ENCODE measurements at regions of chr10 and their contacts with region 1.

Region 1: DNA sequence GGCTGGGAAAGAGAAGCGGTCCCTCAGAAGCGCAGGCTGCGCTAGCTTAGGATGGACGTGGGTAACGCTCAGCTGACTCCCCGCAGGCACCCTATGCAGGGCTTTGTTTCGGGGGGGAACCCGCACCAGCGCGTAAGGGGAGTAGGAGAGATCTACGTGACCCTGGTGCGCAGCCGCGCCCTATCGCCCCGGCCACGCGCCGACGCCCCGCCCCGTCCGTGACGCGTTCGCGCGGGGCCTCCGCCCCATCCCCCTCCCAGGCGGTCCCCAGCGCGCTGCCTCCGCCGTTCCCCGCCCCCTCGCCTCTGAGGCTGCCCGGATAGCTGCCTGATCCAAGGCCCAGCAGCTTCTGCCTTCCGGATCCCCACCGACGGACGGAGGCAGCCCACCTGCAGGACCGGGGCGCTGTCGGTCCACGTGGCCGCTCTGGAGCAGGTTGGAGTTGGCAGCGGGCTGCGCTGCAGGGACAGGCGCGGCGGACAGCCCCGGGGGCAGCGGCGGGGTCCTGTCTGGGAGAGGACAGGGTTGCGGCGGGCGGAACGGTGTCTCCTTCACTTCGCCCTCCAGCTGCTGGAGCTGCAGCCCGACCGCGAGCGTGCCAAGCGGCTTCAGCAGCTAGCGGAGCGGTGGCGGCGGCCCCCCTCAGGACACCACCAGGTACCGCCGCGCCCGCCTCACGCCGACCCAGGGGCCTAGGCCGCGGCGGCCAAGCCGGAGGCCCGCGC is at the start of gene VDAC2:
- DNase-seq: peak; percentile 75
- ATAC-seq: peak; percentile 91
- H3K4me3 ChIP-seq: peak within 1 kb of the TSS; percentile 91
- H3K27ac ChIP-seq: peak within 1 kb of the TSS; percentile 98
- H3K4me1 ChIP-seq: 0 out of 2 replicates have a peak, but pooled peaks cover 4% of the 10 kb centered on the region
- H3K27me3 ChIP-seq: no peaks in the 10 kb centered on the region
- CTCF ChIP-seq: no peak
- EP300 ChIP-seq: peak; percentile 23 to 31; a peak in 1 of 4 replicates
- POLR2A ChIP-seq: peak; percentile 92
- RAD21 ChIP-seq: no peak
- polyA plus RNA-seq, gene VDAC2: 99.7 to 136 TPM

Region 2: DNA sequence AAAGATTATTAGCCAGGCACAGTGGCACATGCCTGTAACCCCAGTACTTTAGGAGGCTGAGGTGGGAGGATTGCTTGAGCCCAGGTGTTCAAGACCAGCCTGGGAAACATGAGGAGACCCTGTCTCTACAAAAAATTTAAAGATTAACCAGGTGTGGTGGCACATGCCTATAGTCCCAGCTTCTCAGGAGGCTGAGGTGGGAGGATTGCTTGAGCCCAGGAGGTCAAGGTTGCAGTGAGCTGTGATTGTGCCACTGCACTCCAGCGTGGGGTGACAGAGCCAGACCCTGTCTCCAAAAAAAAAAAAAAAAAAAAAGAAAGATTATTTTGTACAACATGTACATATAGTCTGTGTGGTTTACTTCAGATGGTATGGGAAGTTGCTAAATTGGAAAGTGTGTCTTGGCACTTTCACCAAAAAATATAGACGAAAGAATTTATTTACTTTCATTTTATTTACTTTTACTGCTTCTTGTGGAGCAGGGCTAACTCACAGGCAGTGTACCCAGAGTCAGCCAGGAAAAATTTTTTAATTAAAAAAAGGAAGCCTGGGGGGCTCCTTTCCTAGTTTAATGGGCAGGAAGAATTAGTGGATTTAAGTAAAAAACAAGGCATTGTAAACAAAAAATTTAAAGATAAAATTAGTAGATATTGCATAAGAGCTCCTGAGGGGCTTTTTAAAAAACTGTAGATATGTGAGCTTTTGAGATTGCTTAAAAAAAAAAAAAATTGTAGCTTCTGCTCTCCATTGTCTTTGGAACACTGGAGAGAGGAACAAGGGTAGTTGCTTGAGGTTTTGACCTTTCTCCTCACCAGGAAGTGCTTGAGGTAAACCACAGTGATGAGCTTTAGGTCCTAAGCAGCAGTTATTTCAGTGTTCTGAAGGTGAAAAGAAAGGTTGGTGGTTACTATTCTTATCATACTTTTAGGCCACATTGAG is 44.5 kb before region 1 on chr10:
- CTCF ChIA-PET with region 1: no interaction called
- POLR2A ChIA-PET with region 1: interaction called, 4 read pairs
- RAD21 ChIA-PET with region 1: interaction called, 13 read pairs
- SMC1A ChIA-PET with region 1: interaction called, 3 read pairs
- in situ Hi-C with region 1: no loop called
- intact Hi-C with region 1: no loop called
- DNase-seq: peak; percentile 62
- ATAC-seq: peak; percentile 94
- H3K4me3 ChIP-seq: peak overlapping the region; percentile 57
- H3K27ac ChIP-seq: peak overlapping the region; percentile 76
- H3K4me1 ChIP-seq: peaks cover 17% of the 10 kb centered on the region
- H3K27me3 ChIP-seq: no peaks in the 10 kb centered on the region
- CTCF ChIP-seq: no peak
- EP300 ChIP-seq: peak; percentile 44 to 47; a peak in 1 of 4 replicates
- POLR2A ChIP-seq: no peak
- RAD21 ChIP-seq: no peak

Region 3: DNA sequence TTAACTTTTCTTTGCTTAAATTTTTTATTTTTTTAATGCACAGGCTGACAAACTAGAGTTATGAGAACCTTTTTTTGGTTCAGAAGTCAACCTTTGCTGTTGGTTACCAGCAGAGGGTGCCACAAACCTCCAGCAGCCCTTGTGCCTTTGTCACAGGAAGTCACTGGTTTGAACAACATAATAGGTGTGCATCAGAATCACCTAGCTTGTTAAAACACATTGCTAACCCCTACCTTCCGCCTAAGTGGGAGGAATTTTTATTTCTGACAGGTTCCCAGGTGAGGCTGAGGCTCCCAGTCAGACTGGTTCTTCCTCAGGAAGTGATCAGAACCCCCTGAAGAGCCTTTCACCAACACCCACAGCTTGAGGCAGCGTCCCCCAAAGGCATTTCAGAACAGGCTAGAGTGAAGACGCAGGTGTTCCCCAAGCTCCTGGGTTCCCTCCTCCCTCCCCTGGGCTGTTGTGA is 22.4 kb before region 1 on chr10:
- CTCF ChIA-PET with region 1: interaction called, 20 read pairs
- POLR2A ChIA-PET with region 1: interaction called, 4 read pairs
- RAD21 ChIA-PET with region 1: interaction called, 14 read pairs
- SMC1A ChIA-PET with region 1: interaction called, 9 read pairs
- in situ Hi-C with region 1: no loop called
- intact Hi-C with region 1: no loop called
- DNase-seq: peak; percentile 20
- ATAC-seq: peak; percentile 96
- H3K4me3 ChIP-seq: no peak overlapping the region
- H3K27ac ChIP-seq: no peak overlapping the region
- H3K4me1 ChIP-seq: no peaks in the 10 kb centered on the region
- H3K27me3 ChIP-seq: no peaks in the 10 kb centered on the region
- CTCF ChIP-seq: peak; percentile 75 to 81 (median 79)
- EP300 ChIP-seq: no peak
- POLR2A ChIP-seq: no peak
- RAD21 ChIP-seq: peak; percentile 83

Region 4: DNA sequence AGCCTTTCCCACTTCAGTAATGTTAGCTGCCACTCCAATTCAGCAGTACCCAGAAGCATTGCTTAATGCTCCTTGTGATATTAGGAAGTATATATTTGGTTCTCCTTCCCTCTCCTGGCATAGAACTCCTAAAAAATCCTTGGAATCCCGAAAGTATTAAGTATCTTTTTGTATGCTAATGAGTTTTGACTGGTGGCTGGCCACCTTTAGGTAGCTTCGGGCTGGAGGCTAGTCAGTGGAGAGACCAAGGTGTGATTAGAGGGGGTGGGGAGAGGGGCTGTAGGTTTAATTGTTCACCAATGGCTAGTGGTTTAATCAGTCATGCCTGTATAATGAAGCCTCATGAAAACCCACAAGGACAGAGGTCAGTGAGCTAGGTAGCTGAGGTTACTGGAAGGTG is 13.1 kb after region 1 on chr10:
- CTCF ChIA-PET with region 1: interaction called, 76 read pairs
- POLR2A ChIA-PET with region 1: interaction called, 21 read pairs
- RAD21 ChIA-PET with region 1: interaction called, 3 read pairs
- SMC1A ChIA-PET with region 1: interaction called, 8 read pairs
- in situ Hi-C with region 1: no loop called
- intact Hi-C with region 1: no loop called
- DNase-seq: no peak
- ATAC-seq: no peak; the same call in 1 of the 3 replicates
- H3K4me3 ChIP-seq: no peak overlapping the region
- H3K27ac ChIP-seq: no peak overlapping the region
- H3K4me1 ChIP-seq: peaks cover 3% of the 10 kb centered on the region
- H3K27me3 ChIP-seq: no peaks in the 10 kb centered on the region
- CTCF ChIP-seq: no peak
- EP300 ChIP-seq: no peak
- POLR2A ChIP-seq: no peak
- RAD21 ChIP-seq: no peak

Region 5: GRCh38 chr10:75229971-75230370 is 19.5 kb after region 1 on chr10:
- CTCF ChIA-PET with region 1: interaction called, 76 read pairs
- POLR2A ChIA-PET with region 1: interaction called, 26 read pairs
- RAD21 ChIA-PET with region 1: interaction called, 8 read pairs
- SMC1A ChIA-PET with region 1: interaction called, 18 read pairs
- in situ Hi-C with region 1: no loop called
- intact Hi-C with region 1: loop called (anchors 2 kb)
- DNase-seq: no peak
- ATAC-seq: no peak
- H3K4me3 ChIP-seq: no peak overlapping the region
- H3K27ac ChIP-seq: no peak overlapping the region
- H3K4me1 ChIP-seq: peaks cover 9% of the 10 kb centered on the region
- H3K27me3 ChIP-seq: no peaks in the 10 kb centered on the region
- CTCF ChIP-seq: no peak
- EP300 ChIP-seq: no peak
- POLR2A ChIP-seq: no peak
- RAD21 ChIP-seq: no peak

Region 6: GRCh38 chr10:75261813-75262708 is 51.6 kb after region 1 on chr10:
- CTCF ChIA-PET with region 1: no interaction called
- POLR2A ChIA-PET with region 1: no interaction called
- RAD21 ChIA-PET with region 1: no interaction called
- SMC1A ChIA-PET with region 1: no interaction called
- in situ Hi-C with region 1: no loop called
- intact Hi-C with region 1: no loop called
- DNase-seq: no peak
- ATAC-seq: no peak
- H3K4me3 ChIP-seq: no peak overlapping the region
- H3K27ac ChIP-seq: no peak overlapping the region
- H3K4me1 ChIP-seq: no peaks in the 10 kb centered on the region
- H3K27me3 ChIP-seq: no peaks in the 10 kb centered on the region
- CTCF ChIP-seq: no peak
- EP300 ChIP-seq: no peak
- POLR2A ChIP-seq: no peak
- RAD21 ChIP-seq: no peak

Region 7: GRCh38 chr10:75469006-75469616 is 258.7 kb after region 1 on chr10:
- CTCF ChIA-PET with region 1: no interaction called
- POLR2A ChIA-PET with region 1: no interaction called
- RAD21 ChIA-PET with region 1: no interaction called
- SMC1A ChIA-PET with region 1: no interaction called
- in situ Hi-C with region 1: no loop called
- intact Hi-C with region 1: no loop called
- DNase-seq: no peak
- ATAC-seq: no peak
- H3K4me3 ChIP-seq: no peak overlapping the region
- H3K27ac ChIP-seq: no peak overlapping the region
- H3K4me1 ChIP-seq: no peaks in the 10 kb centered on the region
- H3K27me3 ChIP-seq: peaks cover 0 to 1% of the 10 kb centered on the region in 2 experiments; a peak in 2 of 4 replicates
- CTCF ChIP-seq: no peak
- EP300 ChIP-seq: no peak
- POLR2A ChIP-seq: no peak
- RAD21 ChIP-seq: no peak